ENCODE measurements at regions of chr1 and their contacts with region 1.

Region 1: GRCh38 chr1:91997607-91998195 is 32.1 kb upstream of the EPHX4 start:
- H3K4me3 ChIP-seq: no peak overlapping the region
- H3K27ac ChIP-seq: no peak overlapping the region
- H3K4me1 ChIP-seq: no peaks in the 10 kb centered on the region
- CTCF ChIP-seq: peak; percentile 44

Region 2: DNA sequence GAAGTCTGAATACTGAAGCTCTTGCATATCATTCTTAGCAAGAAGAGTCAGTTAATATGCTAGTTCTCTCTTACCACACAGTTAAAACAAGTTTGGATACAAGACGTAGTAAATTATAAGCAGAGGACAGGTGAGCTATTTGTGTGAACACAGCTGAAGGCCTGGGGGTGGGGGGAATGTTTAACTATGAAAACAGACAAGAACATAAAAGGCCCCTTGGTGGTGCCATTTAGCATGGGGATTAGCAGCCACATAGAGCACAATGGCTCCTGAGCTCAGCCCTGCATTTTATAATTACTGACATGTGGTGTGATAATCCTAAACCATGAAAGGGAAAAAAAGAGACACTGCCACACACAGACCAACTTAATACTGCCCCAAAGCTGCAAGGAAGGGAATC is 206.6 kb before region 1 on chr1:
- CTCF ChIA-PET with region 1: no interaction called
- POLR2A ChIA-PET with region 1: no interaction called
- H3K4me3 ChIP-seq: no peak overlapping the region
- H3K27ac ChIP-seq: no peak overlapping the region
- H3K4me1 ChIP-seq: peaks cover 21% of the 10 kb centered on the region
- CTCF ChIP-seq: peak; percentile 28; the same call in 1 of the 2 replicates

Region 3: GRCh38 chr1:91913018-91913417 is 84.7 kb before region 1 on chr1:
- CTCF ChIA-PET with region 1: no interaction called
- POLR2A ChIA-PET with region 1: no interaction called
- H3K4me3 ChIP-seq: no peak overlapping the region
- H3K27ac ChIP-seq: no peak overlapping the region
- H3K4me1 ChIP-seq: no peaks in the 10 kb centered on the region
- CTCF ChIP-seq: no peak

Region 4: GRCh38 chr1:92051948-92052347 is 54.2 kb after region 1 on chr1:
- CTCF ChIA-PET with region 1: no interaction called
- POLR2A ChIA-PET with region 1: no interaction called
- H3K4me3 ChIP-seq: no peak overlapping the region
- H3K27ac ChIP-seq: no peak overlapping the region
- H3K4me1 ChIP-seq: no peaks in the 10 kb centered on the region
- CTCF ChIP-seq: no peak

Region 5: GRCh38 chr1:92291372-92291999 is 293.8 kb after region 1 on chr1:
- CTCF ChIA-PET with region 1: interaction called, 75 read pairs
- POLR2A ChIA-PET with region 1: no interaction called
- H3K4me3 ChIP-seq: no peak overlapping the region
- H3K27ac ChIP-seq: no peak overlapping the region
- H3K4me1 ChIP-seq: no peaks in the 10 kb centered on the region; the same call in 1 of the 2 replicates
- CTCF ChIP-seq: peak; percentile 51; the same call in 1 of the 2 replicates

Region 6: GRCh38 chr1:92298573-92299476 is 301.1 kb after region 1 on chr1 and contains the starts of genes GLMN and RPAP2:
- CTCF ChIA-PET with region 1: interaction called, 15 read pairs
- POLR2A ChIA-PET with region 1: no interaction called
- H3K4me3 ChIP-seq: peak within 1 kb of the TSS; percentile 68
- H3K27ac ChIP-seq: peak within 1 kb of the TSS; percentile 86
- H3K4me1 ChIP-seq: no peaks in the 10 kb centered on the region
- CTCF ChIP-seq: peak; percentile 77

Measured in HEK293 (cell line).